ENCODE measurements at regions of chr18 and their contacts with region 1.

Region 1: DNA sequence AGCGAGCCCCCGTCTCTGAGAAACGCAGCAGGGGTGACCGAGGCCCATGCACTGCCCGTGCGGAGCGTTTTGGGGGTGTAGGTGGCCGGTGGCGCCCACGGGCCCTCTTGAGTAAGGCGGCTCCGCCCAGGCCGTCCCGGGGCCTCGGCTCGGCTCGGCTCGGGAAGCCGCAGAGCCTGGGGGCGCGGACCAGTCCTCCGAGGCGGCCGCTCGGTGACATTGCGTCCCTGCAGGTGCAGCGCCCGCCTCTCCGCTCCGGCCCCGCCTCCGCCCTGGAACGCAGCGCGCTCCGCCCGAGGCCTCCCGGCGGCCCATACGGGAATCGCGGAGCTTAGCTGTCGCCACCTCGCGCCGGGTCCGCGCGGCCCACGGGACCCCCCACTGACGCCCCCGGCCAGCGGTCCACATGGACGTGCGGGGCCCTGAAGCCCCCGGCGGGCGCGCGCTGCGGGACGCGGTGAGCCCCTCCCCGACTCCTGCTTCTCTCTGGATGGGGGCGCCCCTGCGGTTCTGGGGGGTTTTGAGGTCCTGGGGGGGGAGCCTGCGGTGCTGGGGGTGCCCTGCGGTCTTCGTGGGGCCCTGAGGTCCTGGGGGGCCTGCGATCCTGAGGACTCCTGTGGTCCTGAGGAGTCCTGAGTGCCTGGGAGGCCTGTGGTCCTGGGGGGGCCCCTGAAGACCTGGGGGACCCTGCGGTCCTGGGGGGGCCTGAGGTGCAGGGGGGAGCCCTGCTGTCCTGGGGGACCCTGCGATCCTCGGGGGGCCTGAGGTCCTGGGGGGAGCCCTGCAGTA is at the start of gene HSBP1L1:
- DNase-seq: peak; percentile 64
- H3K4me3 Mint-ChIP-seq: peak within 1 kb of the TSS; percentile 81
- H3K27ac Mint-ChIP-seq: peak within 1 kb of the TSS; percentile 46
- H3K4me1 Mint-ChIP-seq: peaks cover 19% of the 10 kb centered on the region
- H3K27me3 Mint-ChIP-seq: no peaks in the 10 kb centered on the region
- CTCF ChIP-seq: no peak
- total RNA-seq, gene HSBP1L1: 46.6 and 49.4 TPM in 2 replicates

Region 2: DNA sequence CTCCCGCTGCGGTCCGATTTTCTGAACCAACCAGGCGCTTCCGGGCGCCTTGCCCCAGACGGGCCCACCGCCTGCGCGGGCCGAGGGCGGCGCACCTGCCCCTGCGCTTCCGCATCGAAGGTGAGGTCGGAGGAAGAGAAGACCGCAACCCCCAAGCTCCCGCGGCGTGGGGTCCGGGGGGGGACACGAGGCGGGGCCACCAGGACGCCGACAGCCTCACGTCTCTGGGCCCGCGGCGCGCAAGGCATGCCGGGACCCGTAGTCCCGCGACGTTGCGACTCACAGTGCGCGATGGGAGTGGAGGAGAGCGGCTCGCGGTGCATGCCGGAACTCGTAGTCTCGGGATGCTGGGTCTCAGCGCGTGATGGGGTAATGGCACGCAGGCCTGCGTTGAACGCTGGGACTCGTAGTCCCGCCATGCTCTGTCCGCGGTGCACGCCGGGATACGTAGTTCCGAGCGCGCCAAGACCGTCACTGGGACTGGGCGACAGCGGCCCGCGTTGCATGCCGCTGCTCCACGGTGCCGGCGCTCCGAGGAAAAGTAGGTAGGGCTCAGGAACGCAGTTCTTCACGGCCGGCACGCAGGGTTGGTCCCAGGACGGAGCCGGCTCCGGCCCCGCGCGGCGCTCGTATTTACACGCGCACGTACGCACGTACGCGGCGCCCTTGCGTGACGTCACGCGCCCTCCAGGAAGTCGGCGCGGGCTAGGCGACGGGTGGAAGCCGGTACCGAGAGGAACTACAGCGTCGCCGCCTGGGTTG is 285.2 kb before region 1 on chr18 and contains the start of gene CTDP1:
- CTCF ChIA-PET with region 1: interaction called, 3 read pairs
- POLR2A ChIA-PET with region 1: interaction called, 11 read pairs
- intact Hi-C with region 1: loop called (anchors 1 kb)
- DNase-seq: peak; percentile 98
- H3K4me3 Mint-ChIP-seq: peak within 1 kb of the TSS; percentile 92
- H3K27ac Mint-ChIP-seq: peak within 1 kb of the TSS; percentile 97
- H3K4me1 Mint-ChIP-seq: peaks cover 5% of the 10 kb centered on the region
- H3K27me3 Mint-ChIP-seq: no peaks in the 10 kb centered on the region
- CTCF ChIP-seq: no peak
- total RNA-seq, gene CTDP1: 20.3 and 25.1 TPM in 2 replicates

Region 3: DNA sequence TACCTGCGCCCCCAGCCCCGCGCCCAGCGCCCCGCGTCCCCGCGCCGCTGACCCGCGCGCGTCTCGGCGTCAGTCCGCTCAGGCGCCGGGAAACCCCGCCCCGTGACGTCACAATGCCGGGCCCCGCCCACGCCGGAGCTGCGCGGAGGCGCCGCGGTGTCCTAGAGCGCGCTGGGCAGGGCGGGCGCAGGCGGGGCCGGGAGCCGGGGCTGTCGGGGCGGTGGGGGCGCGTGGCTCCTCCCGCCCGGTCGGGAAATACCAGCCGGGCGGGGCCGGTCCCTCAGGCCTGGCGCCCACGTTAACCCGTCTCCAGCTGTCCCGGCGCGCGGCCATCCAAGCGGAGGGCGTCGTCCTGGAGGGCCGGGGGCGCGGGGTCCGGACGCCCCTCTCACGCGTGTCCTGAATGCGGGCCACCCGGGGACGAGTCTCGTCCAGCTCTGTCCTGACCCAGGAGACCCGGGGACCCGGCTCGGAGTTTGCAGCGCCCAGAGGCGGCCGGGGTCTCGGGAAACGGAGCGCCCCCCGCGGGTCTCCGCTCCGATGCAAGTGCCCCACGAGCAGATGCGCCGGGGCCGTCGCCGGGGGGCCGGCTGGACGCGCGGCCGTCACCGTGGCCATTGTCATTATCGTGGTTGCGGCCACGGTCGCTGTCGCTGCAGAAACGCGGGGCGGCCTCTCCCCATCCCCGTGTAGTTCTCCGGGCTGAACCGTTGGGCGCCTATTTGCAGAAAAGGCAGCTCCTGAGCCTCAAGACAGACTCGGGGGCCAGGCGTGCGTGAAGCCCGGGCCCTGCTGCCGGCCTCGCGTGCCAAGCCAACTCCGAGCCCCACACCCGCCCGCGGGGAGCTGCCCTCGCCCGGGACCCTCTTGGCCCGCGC is 12.7 kb before region 1 on chr18 and contains the start of gene SLC66A2:
- CTCF ChIA-PET with region 1: interaction called, 7 read pairs
- POLR2A ChIA-PET with region 1: interaction called, 22 read pairs
- intact Hi-C with region 1: no loop called
- DNase-seq: peak; percentile 78
- H3K4me3 Mint-ChIP-seq: peak within 1 kb of the TSS; percentile 75
- H3K27ac Mint-ChIP-seq: peak within 1 kb of the TSS; percentile 42
- H3K4me1 Mint-ChIP-seq: peaks cover 11% of the 10 kb centered on the region
- H3K27me3 Mint-ChIP-seq: no peaks in the 10 kb centered on the region
- CTCF ChIP-seq: no peak
- total RNA-seq, gene SLC66A2: 21.7 and 24.5 TPM in 2 replicates

Region 4: DNA sequence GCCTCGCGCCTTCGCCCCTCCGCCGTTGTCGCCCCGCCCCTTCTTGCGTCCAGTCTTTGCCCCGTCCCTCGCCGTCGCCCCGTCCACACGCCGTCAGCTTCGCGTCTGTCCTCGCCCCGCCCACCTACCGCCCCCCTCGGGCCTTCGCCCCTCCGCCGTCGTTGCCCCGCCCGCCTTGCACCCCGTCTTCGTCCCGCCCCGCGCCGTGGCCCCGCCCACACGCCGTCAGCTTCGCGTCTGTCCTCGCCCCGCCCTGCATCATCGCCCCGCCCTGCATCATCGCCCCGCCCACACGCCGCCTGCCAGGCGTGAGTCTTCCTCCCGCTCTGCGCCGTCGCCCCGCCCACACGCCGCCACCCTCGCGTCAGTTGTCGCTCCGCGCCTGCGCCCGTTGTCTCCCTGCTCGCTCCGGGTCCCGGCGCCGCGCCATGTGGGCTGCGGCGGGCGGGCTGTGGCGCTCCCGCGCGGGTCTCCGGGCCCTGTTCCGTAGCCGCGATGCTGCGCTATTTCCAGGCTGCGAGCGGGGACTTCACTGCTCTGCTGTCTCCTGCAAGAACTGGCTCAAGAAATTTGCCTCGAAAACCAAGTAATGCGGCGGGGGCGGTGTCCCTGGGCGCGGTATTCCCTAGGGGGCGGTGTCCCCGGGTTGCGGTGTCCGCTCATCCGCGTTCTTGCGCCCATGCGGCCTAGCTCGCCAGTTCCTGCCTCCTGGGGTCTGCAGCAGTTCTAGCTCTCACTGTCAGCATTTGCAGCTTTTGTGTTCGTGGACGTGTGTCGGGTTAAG is 69.7 kb after region 1 on chr18 and contains the start of gene RBFA:
- CTCF ChIA-PET with region 1: interaction called, 6 read pairs
- POLR2A ChIA-PET with region 1: interaction called, 11 read pairs
- intact Hi-C with region 1: no loop called
- DNase-seq: peak; percentile 96
- H3K4me3 Mint-ChIP-seq: peak within 1 kb of the TSS; percentile 92
- H3K27ac Mint-ChIP-seq: peak within 1 kb of the TSS; percentile 100
- H3K4me1 Mint-ChIP-seq: peaks cover 23% of the 10 kb centered on the region
- H3K27me3 Mint-ChIP-seq: no peaks in the 10 kb centered on the region
- CTCF ChIP-seq: peak; percentile 49
- total RNA-seq, gene RBFA: 38.2 and 47.4 TPM in 2 replicates

Region 5: GRCh38 chr18:80105369-80106167 is 141.0 kb after region 1 on chr18:
- CTCF ChIA-PET with region 1: no interaction called
- POLR2A ChIA-PET with region 1: no interaction called
- intact Hi-C with region 1: no loop called
- DNase-seq: no peak
- H3K4me3 Mint-ChIP-seq: no peak overlapping the region
- H3K27ac Mint-ChIP-seq: peak overlapping the region; percentile 0
- H3K4me1 Mint-ChIP-seq: peaks cover 5% of the 10 kb centered on the region
- H3K27me3 Mint-ChIP-seq: no peaks in the 10 kb centered on the region
- CTCF ChIP-seq: no peak

Measured in MCF 10A (cell line).